SK-N-SH (cell line): ENCODE measurements at regions of chr13 and their contacts with region 1.

Region 1: GRCh38 chr13:99916366-99917103 is 55.0 kb downstream of the ZIC5 start:
- DNase-seq: peak; percentile 73
- H3K4me3 ChIP-seq: no peak overlapping the region
- H3K27ac ChIP-seq: no peak overlapping the region
- H3K4me1 ChIP-seq: no peaks in the 10 kb centered on the region
- H3K27me3 ChIP-seq: peaks cover 58% of the 10 kb centered on the region
- CTCF ChIP-seq: peak; percentile 92
- EP300 ChIP-seq: no peak
- RAD21 ChIP-seq: peak; percentile 78

Region 2: GRCh38 chr13:99845161-99845874 is 71.2 kb before region 1 on chr13:
- CTCF ChIA-PET with region 1: no interaction called
- POLR2A ChIA-PET with region 1: no interaction called
- DNase-seq: no peak
- H3K4me3 ChIP-seq: no peak overlapping the region
- H3K27ac ChIP-seq: no peak overlapping the region
- H3K4me1 ChIP-seq: no peaks in the 10 kb centered on the region
- H3K27me3 ChIP-seq: peaks cover 34% of the 10 kb centered on the region
- CTCF ChIP-seq: no peak
- EP300 ChIP-seq: no peak
- RAD21 ChIP-seq: no peak

Region 3: DNA sequence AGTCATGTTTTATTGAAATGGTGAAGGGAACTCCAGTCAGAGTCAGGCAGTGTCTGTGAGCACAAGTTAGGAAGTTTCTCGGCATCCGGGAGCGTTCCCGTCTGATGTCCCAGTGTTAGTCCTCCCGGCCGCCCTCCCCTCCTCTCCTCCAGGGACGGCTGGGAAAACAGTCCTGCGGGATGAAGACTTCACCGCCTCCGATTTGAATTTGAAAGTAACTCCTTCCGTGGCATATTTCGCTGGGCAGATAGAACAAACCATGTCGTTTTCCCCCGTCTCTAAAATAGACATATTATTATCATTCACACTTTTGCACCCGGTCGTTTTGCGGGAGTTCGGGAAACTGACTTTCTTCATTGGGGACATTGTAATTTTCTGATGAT is 21.7 kb before region 1 on chr13:
- CTCF ChIA-PET with region 1: interaction called, 17 read pairs
- POLR2A ChIA-PET with region 1: no interaction called
- DNase-seq: peak; percentile 43
- H3K4me3 ChIP-seq: peak overlapping the region in 1 of 2 experiments; percentile 37; a peak in 2 of 4 replicates
- H3K27ac ChIP-seq: no peak overlapping the region
- H3K4me1 ChIP-seq: no peaks in the 10 kb centered on the region; a peak in 1 of 4 replicates
- H3K27me3 ChIP-seq: peaks cover 85% of the 10 kb centered on the region
- CTCF ChIP-seq: no peak
- EP300 ChIP-seq: no peak
- RAD21 ChIP-seq: no peak

Region 4: GRCh38 chr13:99900960-99901359 is 15.6 kb before region 1 on chr13:
- CTCF ChIA-PET with region 1: interaction called, 17 read pairs
- POLR2A ChIA-PET with region 1: interaction called, 3 read pairs
- DNase-seq: no peak
- H3K4me3 ChIP-seq: no peak overlapping the region
- H3K27ac ChIP-seq: no peak overlapping the region
- H3K4me1 ChIP-seq: no peaks in the 10 kb centered on the region; a peak in 1 of 4 replicates
- H3K27me3 ChIP-seq: peaks cover 70% of the 10 kb centered on the region
- CTCF ChIP-seq: no peak
- EP300 ChIP-seq: no peak
- RAD21 ChIP-seq: no peak

Region 5: GRCh38 chr13:100514788-100515409 is 598.4 kb after region 1 on chr13:
- CTCF ChIA-PET with region 1: interaction called, 23 read pairs
- POLR2A ChIA-PET with region 1: no interaction called
- DNase-seq: peak; percentile 92
- H3K4me3 ChIP-seq: no peak overlapping the region; a peak in 1 of 4 replicates
- H3K27ac ChIP-seq: no peak overlapping the region
- H3K4me1 ChIP-seq: peaks cover 14 to 19% of the 10 kb centered on the region in 2 experiments; a peak in 3 of 4 replicates
- H3K27me3 ChIP-seq: no peaks in the 10 kb centered on the region
- CTCF ChIP-seq: peak; percentile 99
- EP300 ChIP-seq: no peak
- RAD21 ChIP-seq: peak; percentile 99